ENCODE measurements at regions of chr2 and their contacts with region 1.

Region 1: GRCh38 chr2:16617282-16618261 is 48.1 kb downstream of the CYRIA start:
- DNase-seq: peak; percentile 74 to 88
- H3K4me3 ChIP-seq: no peak overlapping the region
- H3K27ac ChIP-seq: peak overlapping the region; percentile 71
- H3K4me1 ChIP-seq: peaks cover 73% of the 10 kb centered on the region
- H3K27me3 ChIP-seq: no peaks in the 10 kb centered on the region
- CTCF ChIP-seq: peak; percentile 65

Region 2: DNA sequence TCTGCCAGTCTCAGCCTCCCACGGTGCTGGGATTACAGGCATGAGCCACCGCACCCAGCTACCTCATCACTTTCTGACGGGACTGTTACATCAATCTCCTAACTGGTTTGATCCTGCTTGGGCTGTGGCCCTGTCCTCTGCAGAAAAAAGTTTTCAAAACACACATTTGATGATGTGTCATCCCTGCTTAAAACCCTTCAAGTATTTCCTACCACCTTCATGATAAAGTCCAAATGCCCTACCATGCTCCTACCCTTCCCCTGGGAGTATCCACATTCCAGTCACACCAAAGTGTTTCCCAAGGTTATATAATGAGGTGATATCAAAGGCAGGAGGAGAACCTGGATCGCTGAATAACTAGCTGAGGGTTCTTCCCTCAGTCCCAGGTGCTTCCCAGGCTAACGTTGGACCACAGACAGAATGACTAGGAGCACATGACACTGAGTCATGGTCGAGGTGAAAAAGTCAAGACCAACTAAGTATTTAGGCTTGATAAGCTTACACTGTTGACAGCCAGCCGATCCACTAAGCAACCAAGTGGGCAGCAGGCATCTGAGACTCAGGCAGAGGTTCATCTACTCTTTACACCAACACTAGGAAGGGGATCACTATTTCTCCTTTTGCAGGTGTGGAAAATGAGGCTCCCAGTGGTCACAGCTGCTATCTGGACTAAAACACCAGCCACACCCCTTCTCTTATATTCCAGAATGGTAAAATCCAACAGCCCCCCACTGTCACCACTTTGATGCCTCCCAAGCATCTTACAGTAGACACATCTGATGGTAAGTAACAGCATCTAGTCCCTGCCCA is 16.3 kb after region 1 on chr2:
- CTCF ChIA-PET with region 1: no interaction called
- POLR2A ChIA-PET with region 1: no interaction called
- intact Hi-C with region 1: loop called (anchors 2 kb)
- DNase-seq: peak; percentile 33 to 90
- H3K4me3 ChIP-seq: no peak overlapping the region
- H3K27ac ChIP-seq: peak overlapping the region; percentile 76
- H3K4me1 ChIP-seq: peaks cover 38% of the 10 kb centered on the region
- H3K27me3 ChIP-seq: no peaks in the 10 kb centered on the region
- CTCF ChIP-seq: no peak